Left lung (tissue), 14 donors: ENCODE measurements at regions of chr2 and their contacts with region 1.

Region 1: DNA sequence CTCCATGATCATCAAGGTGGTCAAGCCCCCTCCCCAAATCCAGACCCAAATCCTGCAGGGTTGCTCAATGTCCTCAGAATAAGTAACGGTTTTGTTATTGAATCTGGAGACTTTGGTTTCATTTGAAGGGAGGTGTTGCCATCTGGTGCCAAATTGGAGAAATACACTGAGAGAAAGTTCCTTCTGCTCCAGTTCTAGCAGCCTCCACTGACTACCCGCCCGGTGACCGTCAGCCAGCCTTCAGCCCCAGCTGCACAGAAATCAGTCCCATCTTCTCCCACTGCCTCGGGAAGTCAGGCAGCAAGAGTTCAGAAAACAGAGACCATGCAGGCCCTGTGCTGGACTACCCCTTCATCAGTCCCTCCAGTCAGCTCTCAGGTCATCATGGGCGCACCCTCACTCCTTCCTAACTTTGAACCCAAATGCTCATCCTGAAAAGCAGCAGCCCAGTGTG is 38.7 kb downstream of the PKDCC start:
- DNase-seq: peak in 1 of 4 donors; percentile 77
- ATAC-seq: peak; percentile 80
- H3K4me3 ChIP-seq: no peak overlapping the region
- H3K27ac ChIP-seq: no peak overlapping the region
- H3K4me1 ChIP-seq: peaks cover 0 to 9% of the 10 kb centered on the region in 2 donors
- H3K27me3 ChIP-seq: no peaks in the 10 kb centered on the region
- CTCF ChIP-seq: peak; percentile 53 to 70

Region 2: GRCh38 chr2:41853427-41854216 is 232.9 kb before region 1 on chr2:
- intact Hi-C with region 1: loop called in 1 of 2 experiments (anchors 5 kb)
- DNase-seq: peak in 2 of 4 donors; percentile 49 to 69
- ATAC-seq: peak; percentile 74
- H3K4me3 ChIP-seq: no peak overlapping the region
- H3K27ac ChIP-seq: no peak overlapping the region
- H3K4me1 ChIP-seq: no peaks in the 10 kb centered on the region
- H3K27me3 ChIP-seq: peaks cover 0 to 10% of the 10 kb centered on the region in 2 donors
- CTCF ChIP-seq: peak; percentile 49 to 53

Region 3: DNA sequence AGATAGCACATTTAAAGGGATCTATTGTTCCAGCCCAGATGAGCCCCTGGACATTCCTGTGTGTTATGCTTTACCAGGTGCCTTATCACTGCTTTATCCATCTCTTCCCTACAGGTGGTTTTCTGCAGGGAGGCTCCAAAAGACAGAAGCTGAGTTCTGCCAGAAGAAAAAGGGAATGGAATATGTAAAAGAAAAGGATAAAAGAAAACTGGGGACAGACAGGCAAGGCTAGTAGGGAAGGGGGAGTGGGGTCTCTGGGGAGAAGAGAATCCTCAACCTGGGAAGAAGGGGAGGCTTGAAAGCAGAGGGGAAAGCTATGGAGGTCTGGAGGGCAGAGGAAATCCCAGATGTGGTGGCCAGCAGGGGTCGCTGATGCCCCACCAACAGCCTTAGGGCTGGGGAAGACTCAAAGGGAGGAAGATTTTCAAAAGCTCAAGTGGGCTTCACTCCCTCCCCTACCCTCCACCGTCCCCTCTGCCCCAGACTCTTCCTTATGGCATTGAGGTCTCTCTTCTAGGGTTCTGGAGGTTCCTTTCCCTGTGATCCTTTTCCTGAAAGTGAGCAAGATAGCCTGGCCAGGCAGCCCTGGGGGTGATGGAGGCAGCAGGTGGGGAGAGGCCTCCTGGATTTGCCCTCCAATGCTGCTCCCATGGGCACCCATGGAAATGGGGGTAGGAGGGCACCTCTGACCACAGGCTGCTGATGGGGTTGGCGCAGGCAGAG is 216.8 kb before region 1 on chr2:
- intact Hi-C with region 1: loop called in 1 of 2 experiments (anchors 5 kb)
- DNase-seq: peak; percentile 57 to 89 (median 78)
- ATAC-seq: peak; percentile 91
- H3K4me3 ChIP-seq: no peak overlapping the region
- H3K27ac ChIP-seq: no peak overlapping the region
- H3K4me1 ChIP-seq: no peaks in the 10 kb centered on the region
- H3K27me3 ChIP-seq: no peaks in the 10 kb centered on the region
- CTCF ChIP-seq: peak; percentile 75 to 78

Region 4: GRCh38 chr2:41955316-41956043 is 131.0 kb before region 1 on chr2:
- intact Hi-C with region 1: no loop called
- DNase-seq: no peak
- ATAC-seq: no peak
- H3K4me3 ChIP-seq: no peak overlapping the region
- H3K27ac ChIP-seq: no peak overlapping the region
- H3K4me1 ChIP-seq: no peaks in the 10 kb centered on the region
- H3K27me3 ChIP-seq: no peaks in the 10 kb centered on the region
- CTCF ChIP-seq: no peak

Region 5: GRCh38 chr2:42372474-42373200 is 286.1 kb after region 1 on chr2:
- intact Hi-C with region 1: no loop called
- DNase-seq: no peak
- ATAC-seq: no peak
- H3K4me3 ChIP-seq: no peak overlapping the region
- H3K27ac ChIP-seq: no peak overlapping the region
- H3K4me1 ChIP-seq: peaks cover 0 to 4% of the 10 kb centered on the region in 2 donors
- H3K27me3 ChIP-seq: no peaks in the 10 kb centered on the region
- CTCF ChIP-seq: no peak